ENCODE measurements at regions of chr2 and their contacts with region 1.

Region 1: DNA sequence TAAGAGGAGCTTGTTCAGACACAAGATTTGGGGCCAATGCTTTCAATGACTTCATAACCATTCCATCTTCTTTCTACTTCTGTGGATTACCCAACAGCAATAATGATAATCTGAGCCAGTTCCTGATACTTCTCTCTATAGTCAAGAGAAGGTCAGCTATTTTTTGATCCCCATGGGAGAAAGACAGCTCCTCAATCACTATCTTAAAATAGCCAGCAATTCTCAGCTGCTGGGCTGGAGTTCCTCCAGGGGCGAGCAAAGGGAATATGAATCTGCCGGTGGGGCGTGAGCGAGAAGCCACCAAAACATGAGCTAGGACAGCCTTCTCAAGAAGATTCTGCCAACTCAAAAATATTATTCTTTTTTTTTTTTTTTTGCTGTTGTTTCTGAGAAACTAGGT is at the start of gene TMEM182:
- DNase-seq: no peak
- ATAC-seq: no peak
- H3K4me3 ChIP-seq: no peak within 1 kb of the TSS
- H3K4me3 Mint-ChIP-seq: no peak within 1 kb of the TSS
- H3K27ac ChIP-seq: no peak within 1 kb of the TSS
- H3K27ac Mint-ChIP-seq: no peak within 1 kb of the TSS
- H3K4me1 ChIP-seq: no peaks in the 10 kb centered on the region
- H3K4me1 Mint-ChIP-seq: no peaks in the 10 kb centered on the region
- H3K27me3 ChIP-seq: no peaks in the 10 kb centered on the region
- H3K27me3 Mint-ChIP-seq: no peaks in the 10 kb centered on the region
- CTCF ChIP-seq: no peak
- total RNA-seq, gene TMEM182: 2.5 to 3.0 TPM

Region 2: GRCh38 chr2:102708847-102709559 is 52.8 kb before region 1 on chr2:
- CTCF ChIA-PET with region 1: no interaction called
- POLR2A ChIA-PET with region 1: no interaction called
- intact Hi-C with region 1: loop called in 1 of 2 experiments (anchors 5 kb)
- DNase-seq: no peak
- ATAC-seq: no peak
- H3K4me3 ChIP-seq: no peak overlapping the region
- H3K4me3 Mint-ChIP-seq: no peak overlapping the region
- H3K27ac ChIP-seq: no peak overlapping the region
- H3K27ac Mint-ChIP-seq: no peak overlapping the region
- H3K4me1 ChIP-seq: no peaks in the 10 kb centered on the region
- H3K4me1 Mint-ChIP-seq: no peaks in the 10 kb centered on the region
- H3K27me3 ChIP-seq: no peaks in the 10 kb centered on the region
- H3K27me3 Mint-ChIP-seq: peaks cover 8% of the 10 kb centered on the region
- CTCF ChIP-seq: no peak

Region 3: GRCh38 chr2:102743259-102743658 is 18.5 kb before region 1 on chr2:
- CTCF ChIA-PET with region 1: interaction called, 3 read pairs
- POLR2A ChIA-PET with region 1: no interaction called
- intact Hi-C with region 1: loop called in 1 of 2 experiments (anchors 2 kb)
- DNase-seq: no peak
- ATAC-seq: no peak
- H3K4me3 ChIP-seq: no peak overlapping the region
- H3K4me3 Mint-ChIP-seq: no peak overlapping the region
- H3K27ac ChIP-seq: no peak overlapping the region
- H3K27ac Mint-ChIP-seq: no peak overlapping the region
- H3K4me1 ChIP-seq: no peaks in the 10 kb centered on the region
- H3K4me1 Mint-ChIP-seq: peaks cover 3% of the 10 kb centered on the region
- H3K27me3 ChIP-seq: no peaks in the 10 kb centered on the region
- H3K27me3 Mint-ChIP-seq: no peaks in the 10 kb centered on the region
- CTCF ChIP-seq: no peak